ENCODE measurements at regions of chr12 and their contacts with region 1.

Region 1: DNA sequence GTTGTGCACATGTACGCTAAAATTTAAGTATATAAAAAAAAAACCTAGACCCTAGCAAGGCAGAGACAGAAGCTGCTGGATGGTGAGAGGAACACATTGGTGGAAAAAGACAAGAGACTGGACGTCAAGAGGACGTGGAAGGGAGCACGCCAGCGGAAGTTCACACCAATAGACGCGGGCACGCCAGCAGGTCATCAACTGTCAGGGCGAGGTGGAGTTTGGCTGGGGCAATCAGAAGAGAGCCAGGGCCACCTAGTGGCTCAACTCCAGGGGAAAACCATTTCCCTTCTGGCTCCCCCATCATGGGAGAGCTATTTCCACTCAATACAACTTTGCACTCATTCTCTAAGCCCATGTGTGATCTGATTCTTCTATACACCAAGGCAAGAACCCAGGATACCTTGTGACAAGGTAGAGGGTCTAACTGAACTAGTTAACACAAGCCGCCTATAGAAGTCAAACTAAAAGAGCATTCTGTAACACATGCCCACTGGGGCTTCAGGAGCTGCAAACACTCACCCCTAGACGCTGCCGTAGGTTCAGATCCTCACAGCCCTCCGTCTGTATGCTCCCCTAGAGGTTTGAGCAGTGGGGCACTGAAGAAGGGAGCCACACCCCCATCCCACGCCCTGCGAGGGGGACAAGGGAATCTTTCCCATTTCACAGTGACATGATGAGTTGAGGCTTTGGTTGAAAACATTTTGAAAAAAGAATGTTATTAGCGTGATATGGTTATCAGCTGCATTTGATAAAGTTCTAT is 702.7 kb downstream of the TMTC2 start:
- DNase-seq: peak in 5 of 10 donors; percentile 25 to 85 (median 52)

Region 2: GRCh38 chr12:82672811-82673495 is 716.5 kb before region 1 on chr12:
- intact Hi-C with region 1: loop called (anchors 10 kb)
- DNase-seq: no peak

Measured in posterior cingulate gyrus (tissue), 11 donors.